IMR-90 (cell line): ENCODE measurements at regions of chr12 and their contacts with region 1.

Region 1: GRCh38 chr12:94101738-94102660 is 46.4 kb upstream of the PLXNC1 start:
- DNase-seq: peak; percentile 82
- ATAC-seq: peak; percentile 91
- H3K4me3 ChIP-seq: peak overlapping the region; percentile 53
- H3K27ac ChIP-seq: peak overlapping the region; percentile 27
- H3K4me1 ChIP-seq: peaks cover 10% of the 10 kb centered on the region
- H3K27me3 ChIP-seq: no peaks in the 10 kb centered on the region
- CTCF ChIP-seq: peak; percentile 90
- POLR2A ChIP-seq: no peak
- RAD21 ChIP-seq: peak; percentile 92

Region 2: GRCh38 chr12:93025145-93025805 is 1076.7 kb before region 1 on chr12:
- CTCF ChIA-PET with region 1: no interaction called
- POLR2A ChIA-PET with region 1: no interaction called
- dilution Hi-C with region 1: no loop called
- in situ Hi-C with region 1: no loop called
- intact Hi-C with region 1: loop called (anchors 10 kb)
- DNase-seq: peak; percentile 75
- ATAC-seq: peak; percentile 91
- H3K4me3 ChIP-seq: no peak overlapping the region
- H3K27ac ChIP-seq: no peak overlapping the region
- H3K4me1 ChIP-seq: no peaks in the 10 kb centered on the region
- H3K27me3 ChIP-seq: no peaks in the 10 kb centered on the region
- CTCF ChIP-seq: peak; percentile 72
- POLR2A ChIP-seq: no peak
- RAD21 ChIP-seq: peak; percentile 87

Region 3: DNA sequence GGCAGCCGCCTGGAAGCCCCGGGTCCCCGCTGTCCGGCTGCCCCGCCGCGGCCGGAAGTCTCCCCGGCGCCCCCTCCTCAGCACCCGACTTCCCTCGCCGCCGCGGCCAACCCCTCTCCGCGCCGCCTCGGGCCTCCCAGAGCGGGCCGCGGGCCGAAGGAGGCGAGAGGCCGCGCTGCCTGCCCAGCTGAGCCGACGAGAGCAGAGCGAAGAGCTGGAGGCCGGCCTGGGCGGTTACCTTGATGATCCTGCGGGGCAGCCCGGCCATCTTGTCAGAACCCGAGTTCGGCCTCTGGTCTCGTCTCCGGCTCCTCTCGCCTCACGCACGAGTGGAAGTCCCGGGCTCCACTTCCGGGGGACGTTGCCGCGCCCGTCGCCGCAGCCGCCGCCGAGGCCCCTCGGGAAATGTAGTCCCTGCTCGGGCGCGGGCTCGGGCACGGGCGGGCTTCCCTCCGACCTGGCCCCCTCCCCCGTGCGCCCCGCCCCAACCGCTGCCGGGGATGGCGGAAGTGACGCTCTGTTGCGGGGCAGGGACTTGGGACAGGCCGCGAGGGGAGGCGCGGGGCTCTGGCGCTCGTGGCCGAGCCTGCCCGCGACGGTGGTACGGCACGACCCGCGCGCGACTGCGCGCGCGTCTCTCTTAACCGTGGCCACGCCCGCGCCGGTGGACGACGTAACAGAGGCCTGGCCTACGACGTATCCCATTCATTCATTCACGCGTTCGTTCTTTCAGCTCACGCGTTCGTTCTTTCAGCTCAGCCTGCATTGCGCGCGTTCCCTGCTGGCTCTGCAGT is 660.2 kb before region 1 on chr12 and contains the start of gene UBE2N:
- CTCF ChIA-PET with region 1: no interaction called
- POLR2A ChIA-PET with region 1: no interaction called
- dilution Hi-C with region 1: no loop called
- in situ Hi-C with region 1: no loop called
- intact Hi-C with region 1: loop called (anchors 1 kb)
- DNase-seq: peak; percentile 93
- ATAC-seq: peak; percentile 95
- H3K4me3 ChIP-seq: peak within 1 kb of the TSS; percentile 86
- H3K27ac ChIP-seq: peak within 1 kb of the TSS; percentile 97
- H3K4me1 ChIP-seq: peaks cover 6% of the 10 kb centered on the region
- H3K27me3 ChIP-seq: no peaks in the 10 kb centered on the region
- CTCF ChIP-seq: no peak; the same call in 1 of the 2 replicates
- POLR2A ChIP-seq: peak; percentile 81
- RAD21 ChIP-seq: peak; percentile 33; the same call in 1 of the 2 replicates
- total RNA-seq, gene UBE2N: 64.5 and 90.3 TPM in 2 replicates

Region 4: GRCh38 chr12:93569656-93570551 is 532.1 kb before region 1 on chr12:
- CTCF ChIA-PET with region 1: interaction called, 41 read pairs
- POLR2A ChIA-PET with region 1: no interaction called
- dilution Hi-C with region 1: no loop called
- in situ Hi-C with region 1: loop called (anchors 5 kb)
- intact Hi-C with region 1: loop called (anchors 1 kb)
- DNase-seq: peak; percentile 84
- ATAC-seq: peak; percentile 65
- H3K4me3 ChIP-seq: peak overlapping the region; percentile 76
- H3K27ac ChIP-seq: peak overlapping the region; percentile 73
- H3K4me1 ChIP-seq: no peaks in the 10 kb centered on the region
- H3K27me3 ChIP-seq: no peaks in the 10 kb centered on the region
- CTCF ChIP-seq: peak; percentile 78
- POLR2A ChIP-seq: no peak
- RAD21 ChIP-seq: peak; percentile 81

Region 5: GRCh38 chr12:93677195-93678064 is 424.6 kb before region 1 on chr12 and contains the start of gene CRADD:
- CTCF ChIA-PET with region 1: no interaction called
- POLR2A ChIA-PET with region 1: no interaction called
- dilution Hi-C with region 1: no loop called
- in situ Hi-C with region 1: no loop called
- intact Hi-C with region 1: loop called (anchors 2 kb)
- DNase-seq: peak; percentile 99
- ATAC-seq: peak; percentile 96
- H3K4me3 ChIP-seq: peak within 1 kb of the TSS; percentile 55
- H3K27ac ChIP-seq: peak within 1 kb of the TSS; percentile 87
- H3K4me1 ChIP-seq: peaks cover 2% of the 10 kb centered on the region; the same call in 1 of the 2 replicates
- H3K27me3 ChIP-seq: no peaks in the 10 kb centered on the region
- CTCF ChIP-seq: no peak
- POLR2A ChIP-seq: peak; percentile 86
- RAD21 ChIP-seq: 0 out of 2 replicates have a peak, but pooled peaks have one; percentile 4
- total RNA-seq, gene CRADD: 12.2 and 14.0 TPM in 2 replicates

Region 6: DNA sequence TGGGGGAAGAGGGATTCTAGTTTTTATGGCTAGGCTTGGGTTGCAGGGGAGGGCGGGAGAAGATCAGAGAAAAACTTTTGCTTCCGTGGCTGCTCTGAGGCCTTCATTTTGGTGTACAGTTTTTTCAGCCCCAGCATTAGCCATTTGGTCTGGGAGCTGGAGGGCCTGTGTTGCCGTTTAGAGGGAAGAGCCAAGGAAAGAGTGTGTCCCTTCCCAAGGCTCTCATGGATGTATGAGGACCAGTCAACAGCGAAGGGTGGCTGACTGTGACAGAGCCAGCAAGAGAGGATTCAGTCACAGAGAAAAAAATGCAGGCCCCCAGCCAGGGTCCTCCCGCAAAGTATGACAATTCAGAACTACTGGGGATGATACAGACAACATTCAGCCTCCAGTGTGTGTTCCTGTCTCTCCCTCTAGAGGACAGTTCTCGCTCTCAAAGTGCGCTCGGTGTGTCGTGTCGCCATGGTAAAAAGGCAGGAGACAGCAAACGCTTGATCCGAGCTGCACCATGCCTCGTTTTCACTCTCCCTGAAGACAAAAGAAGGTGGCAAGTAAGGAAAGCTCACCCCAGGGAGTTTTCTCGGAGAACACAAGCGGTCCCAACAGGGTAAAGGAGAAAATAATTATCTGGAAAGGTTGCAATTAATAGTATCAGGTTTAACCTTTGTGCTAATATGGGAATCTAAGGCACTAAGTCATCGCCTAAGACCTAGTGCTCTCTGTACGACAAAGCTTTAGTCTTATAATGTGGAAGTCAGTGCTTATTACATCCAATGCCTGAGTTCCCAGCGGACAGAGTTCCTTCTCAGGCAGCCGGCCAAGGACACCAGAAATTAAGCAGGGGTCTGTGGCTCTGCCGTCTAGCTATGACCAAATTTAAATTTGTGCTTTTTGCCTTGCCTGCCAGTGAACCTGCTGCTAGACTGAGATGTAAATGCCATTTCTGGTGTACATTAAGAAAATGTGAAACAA is 110.9 kb before region 1 on chr12:
- CTCF ChIA-PET with region 1: interaction called, 5 read pairs
- POLR2A ChIA-PET with region 1: no interaction called
- dilution Hi-C with region 1: no loop called
- in situ Hi-C with region 1: no loop called
- intact Hi-C with region 1: loop called (anchors 5 kb)
- DNase-seq: peak; percentile 52
- ATAC-seq: peak; percentile 72
- H3K4me3 ChIP-seq: no peak overlapping the region
- H3K27ac ChIP-seq: no peak overlapping the region
- H3K4me1 ChIP-seq: no peaks in the 10 kb centered on the region
- H3K27me3 ChIP-seq: no peaks in the 10 kb centered on the region
- CTCF ChIP-seq: peak; percentile 42
- POLR2A ChIP-seq: no peak
- RAD21 ChIP-seq: peak; percentile 38

Region 7: GRCh38 chr12:94112132-94112531 is 10.1 kb after region 1 on chr12:
- CTCF ChIA-PET with region 1: interaction called, 13 read pairs
- POLR2A ChIA-PET with region 1: no interaction called
- dilution Hi-C with region 1: no loop called
- in situ Hi-C with region 1: no loop called
- intact Hi-C with region 1: no loop called
- DNase-seq: no peak
- ATAC-seq: no peak
- H3K4me3 ChIP-seq: no peak overlapping the region
- H3K27ac ChIP-seq: no peak overlapping the region
- H3K4me1 ChIP-seq: peaks cover 1% of the 10 kb centered on the region; the same call in 1 of the 2 replicates
- H3K27me3 ChIP-seq: peaks cover 3% of the 10 kb centered on the region
- CTCF ChIP-seq: no peak
- POLR2A ChIP-seq: no peak
- RAD21 ChIP-seq: no peak